ENCODE measurements at regions of chr1 and their contacts with region 1.

Region 1: DNA sequence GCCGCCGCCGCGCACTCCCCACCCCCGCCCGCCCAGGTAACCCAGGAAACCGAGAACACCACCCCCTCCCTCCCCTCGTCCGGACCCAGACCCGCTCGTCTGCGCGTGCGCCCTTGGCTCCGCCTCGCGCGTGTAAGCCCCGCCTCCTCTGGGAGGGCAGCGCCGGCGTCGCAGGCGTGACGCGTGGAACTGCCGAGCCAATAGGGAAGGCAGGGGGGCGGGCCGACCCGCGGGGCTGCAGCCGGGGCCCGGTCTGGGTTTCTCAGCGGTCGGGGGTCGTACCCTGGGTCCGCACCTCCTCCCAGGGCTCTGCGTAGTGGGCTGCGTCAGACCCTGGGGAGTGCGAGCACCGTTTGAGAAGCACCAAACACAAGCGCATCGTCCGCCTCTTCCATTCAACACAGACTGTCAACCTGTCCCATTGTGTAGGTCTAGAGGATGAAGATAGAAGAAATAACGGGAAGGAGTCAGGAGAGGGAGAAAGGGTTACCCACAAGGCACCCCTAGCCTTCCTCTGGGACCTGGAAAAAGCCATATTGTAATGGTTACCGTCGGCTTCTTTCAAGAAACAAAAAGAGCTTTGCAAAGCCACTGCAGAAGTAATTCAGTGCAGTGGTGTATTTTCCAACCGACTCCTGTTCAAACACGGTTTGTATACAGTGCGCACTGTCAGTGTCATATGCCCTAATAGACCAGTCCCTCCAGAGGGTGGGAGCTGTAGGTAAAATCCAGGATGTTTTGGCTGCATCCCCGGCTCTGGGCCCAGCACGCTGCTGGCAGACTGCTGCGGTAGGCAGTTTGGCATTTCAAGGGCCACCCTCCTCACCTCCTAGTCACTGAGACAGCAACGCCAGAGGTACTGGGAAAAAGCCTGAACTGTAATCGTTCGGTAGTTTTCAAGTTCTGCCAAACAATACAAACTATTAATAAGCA is 473 bp upstream of the LYST start:
- DNase-seq: peak; percentile 97 to 100 (median 99)
- ATAC-seq: peak; percentile 85
- H3K4me3 ChIP-seq: peak overlapping the region; percentile 89
- H3K4me3 Mint-ChIP-seq: peak overlapping the region; percentile 84 to 99 (median 96)
- H3K27ac ChIP-seq: peak overlapping the region; percentile 99
- H3K27ac Mint-ChIP-seq: peak overlapping the region; percentile 93 to 100 (median 98)
- H3K4me1 ChIP-seq: peaks cover 25 to 31% of the 10 kb centered on the region in 2 donors
- H3K4me1 Mint-ChIP-seq: peaks cover 32 to 55% (median 51%) of the 10 kb centered on the region in 7 donors
- H3K27me3 ChIP-seq: no peaks in the 10 kb centered on the region
- H3K27me3 Mint-ChIP-seq: no peaks in the 10 kb centered on the region

Region 2: DNA sequence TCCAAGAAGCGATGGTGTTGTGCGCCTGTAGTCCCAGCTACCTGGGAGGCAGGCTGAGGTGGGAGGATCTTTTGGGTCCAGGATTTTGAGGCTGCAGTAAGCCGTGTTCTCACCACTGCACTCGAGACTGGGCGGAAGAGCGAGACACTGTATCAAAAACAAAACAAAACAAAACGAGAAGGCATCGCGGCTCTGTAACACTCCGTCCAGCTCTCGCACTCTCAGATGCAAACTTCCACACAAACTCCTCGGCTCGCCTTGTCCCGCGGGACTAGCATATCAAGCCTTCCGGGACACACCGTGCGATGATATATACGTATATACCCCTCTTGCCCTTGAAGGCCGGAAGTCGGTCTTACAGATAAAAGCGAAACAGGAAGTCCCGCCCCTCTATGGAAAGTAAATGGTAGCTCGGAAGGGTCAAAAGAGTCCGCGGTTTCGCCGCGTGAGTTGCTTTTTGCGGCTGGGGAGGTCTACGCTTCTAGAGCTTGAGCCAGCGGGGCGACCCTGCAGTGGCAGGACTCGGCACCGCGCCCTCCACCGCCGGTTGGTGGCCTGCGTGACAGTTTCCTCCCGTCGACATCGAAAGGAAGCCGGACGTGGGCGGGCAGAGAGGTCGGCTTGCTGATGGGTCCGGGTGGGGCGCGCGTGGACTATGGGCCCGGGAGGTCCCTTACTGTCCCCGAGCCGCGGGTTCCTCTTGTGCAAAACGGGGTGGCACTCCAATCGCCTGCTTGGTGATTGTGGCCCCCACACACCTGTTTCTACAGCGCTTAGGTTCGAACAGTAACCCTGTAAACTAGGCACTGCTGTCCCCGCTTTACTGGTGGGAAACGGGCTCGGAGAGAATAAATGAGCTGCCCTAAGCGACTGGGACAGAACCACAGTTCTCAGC is 1493.9 kb before region 1 on chr1 and contains the start of gene COA6:
- CTCF ChIA-PET with region 1: no interaction called
- POLR2A ChIA-PET with region 1: no interaction called
- intact Hi-C with region 1: loop called in 1 of 2 experiments (anchors 5 kb)
- DNase-seq: peak; percentile 76 to 92 (median 90)
- ATAC-seq: peak; percentile 91
- H3K4me3 ChIP-seq: peak within 1 kb of the TSS; percentile 73
- H3K4me3 Mint-ChIP-seq: peak within 1 kb of the TSS; percentile 93 to 100 (median 97)
- H3K27ac ChIP-seq: peak within 1 kb of the TSS; percentile 95
- H3K27ac Mint-ChIP-seq: peak within 1 kb of the TSS; percentile 97 to 100 (median 99)
- H3K4me1 ChIP-seq: peaks cover 12 to 16% of the 10 kb centered on the region in 2 donors
- H3K4me1 Mint-ChIP-seq: peaks cover 30 to 66% (median 63%) of the 10 kb centered on the region in 7 donors
- H3K27me3 ChIP-seq: no peaks in the 10 kb centered on the region
- H3K27me3 Mint-ChIP-seq: no peaks in the 10 kb centered on the region
- total RNA-seq, gene COA6: 9.5 to 47.3 (median 18.5) TPM

Region 3: DNA sequence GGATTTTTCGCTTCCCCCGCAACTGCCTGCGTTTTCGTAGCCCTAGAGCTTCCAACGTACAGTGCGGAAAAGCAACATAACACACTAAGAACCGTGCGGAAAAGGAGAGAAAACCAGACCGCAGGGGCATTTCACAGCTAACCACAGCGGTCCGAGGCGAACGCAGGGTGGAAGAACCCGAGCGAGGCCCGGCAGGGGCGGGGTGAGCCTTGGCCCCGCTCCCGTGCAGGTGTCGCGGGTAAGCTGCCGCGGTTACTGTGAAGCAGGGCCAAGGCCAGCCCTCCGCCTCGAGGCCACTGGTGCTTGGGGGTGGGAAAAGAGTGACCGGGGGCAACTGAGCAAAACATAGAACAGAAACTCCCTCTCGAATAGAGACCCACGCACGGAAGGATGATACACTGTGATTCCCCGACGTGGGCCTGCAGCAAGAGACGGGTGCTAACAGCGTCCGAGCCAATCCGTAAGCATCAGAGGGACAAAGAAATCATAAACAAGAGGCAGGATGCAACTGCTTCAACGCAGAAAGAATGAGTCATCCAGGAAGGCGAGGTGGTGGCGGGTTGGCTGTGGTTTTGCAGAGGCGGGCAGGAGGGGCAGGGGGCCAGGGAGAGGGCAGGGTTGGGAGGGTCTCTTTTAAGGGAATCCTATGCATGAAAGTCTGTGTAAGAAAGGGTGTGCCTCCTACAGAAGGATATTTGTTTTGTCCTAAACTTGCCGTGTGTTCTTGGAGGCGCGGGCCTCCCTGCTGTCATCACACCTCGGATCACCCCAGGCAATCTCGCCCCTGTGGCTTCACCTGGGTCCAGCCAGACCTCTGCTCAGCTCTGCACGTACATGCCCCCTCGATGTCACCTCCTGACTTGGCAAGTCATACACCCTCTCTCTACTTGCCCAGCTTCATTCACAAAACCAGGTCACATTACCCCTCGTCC is 224.9 kb before region 1 on chr1:
- CTCF ChIA-PET with region 1: no interaction called
- POLR2A ChIA-PET with region 1: no interaction called
- intact Hi-C with region 1: loop called in 1 of 2 experiments (anchors 2 kb)
- DNase-seq: peak; percentile 20 to 88 (median 40)
- ATAC-seq: peak; percentile 86
- H3K4me3 ChIP-seq: peak overlapping the region; percentile 42
- H3K4me3 Mint-ChIP-seq: peak overlapping the region; percentile 57 to 90 (median 82)
- H3K27ac ChIP-seq: no peak overlapping the region
- H3K27ac Mint-ChIP-seq: peak overlapping the region; percentile 8 to 95 (median 79)
- H3K4me1 ChIP-seq: peaks cover 4 to 26% of the 10 kb centered on the region in 2 donors
- H3K4me1 Mint-ChIP-seq: peaks cover 15 to 57% (median 19%) of the 10 kb centered on the region in 7 donors
- H3K27me3 ChIP-seq: no peaks in the 10 kb centered on the region
- H3K27me3 Mint-ChIP-seq: peaks cover 19 to 33% (median 29%) of the 10 kb centered on the region in 5 donors

Region 4: GRCh38 chr1:235917267-235917811 is 50.2 kb after region 1 on chr1:
- CTCF ChIA-PET with region 1: interaction called, 3 read pairs
- POLR2A ChIA-PET with region 1: interaction called, 3 read pairs
- intact Hi-C with region 1: loop called (anchors 1 to 5 kb)
- DNase-seq: peak in 8 of 9 donors; percentile 23 to 67 (median 42)
- ATAC-seq: peak; percentile 89
- H3K4me3 ChIP-seq: no peak overlapping the region
- H3K4me3 Mint-ChIP-seq: peak overlapping the region in 6 of 10 donors; percentile 28 to 54 (median 45)
- H3K27ac ChIP-seq: no peak overlapping the region
- H3K27ac Mint-ChIP-seq: peak overlapping the region in 7 of 9 donors; percentile 33 to 79 (median 64)
- H3K4me1 ChIP-seq: peaks cover 3 to 7% of the 10 kb centered on the region in 2 donors
- H3K4me1 Mint-ChIP-seq: peaks cover 9 to 28% (median 13%) of the 10 kb centered on the region in 7 donors
- H3K27me3 ChIP-seq: no peaks in the 10 kb centered on the region
- H3K27me3 Mint-ChIP-seq: peaks cover 0 to 2% (median 0%) of the 10 kb centered on the region in 5 donors

Region 5: GRCh38 chr1:235999259-235999925 is 132.2 kb after region 1 on chr1:
- CTCF ChIA-PET with region 1: no interaction called
- POLR2A ChIA-PET with region 1: interaction called, 3 read pairs
- intact Hi-C with region 1: loop called (anchors 1 kb)
- DNase-seq: peak in 8 of 9 donors; percentile 7 to 75 (median 37)
- ATAC-seq: peak; percentile 90
- H3K4me3 ChIP-seq: no peak overlapping the region
- H3K4me3 Mint-ChIP-seq: peak overlapping the region in 9 of 10 donors; percentile 0 to 71 (median 55)
- H3K27ac ChIP-seq: peak overlapping the region; percentile 22
- H3K27ac Mint-ChIP-seq: peak overlapping the region; percentile 19 to 97 (median 80)
- H3K4me1 ChIP-seq: peaks cover 10 to 31% of the 10 kb centered on the region in 2 donors
- H3K4me1 Mint-ChIP-seq: peaks cover 10 to 71% (median 20%) of the 10 kb centered on the region in 7 donors
- H3K27me3 ChIP-seq: no peaks in the 10 kb centered on the region
- H3K27me3 Mint-ChIP-seq: no peaks in the 10 kb centered on the region

Region 6: DNA sequence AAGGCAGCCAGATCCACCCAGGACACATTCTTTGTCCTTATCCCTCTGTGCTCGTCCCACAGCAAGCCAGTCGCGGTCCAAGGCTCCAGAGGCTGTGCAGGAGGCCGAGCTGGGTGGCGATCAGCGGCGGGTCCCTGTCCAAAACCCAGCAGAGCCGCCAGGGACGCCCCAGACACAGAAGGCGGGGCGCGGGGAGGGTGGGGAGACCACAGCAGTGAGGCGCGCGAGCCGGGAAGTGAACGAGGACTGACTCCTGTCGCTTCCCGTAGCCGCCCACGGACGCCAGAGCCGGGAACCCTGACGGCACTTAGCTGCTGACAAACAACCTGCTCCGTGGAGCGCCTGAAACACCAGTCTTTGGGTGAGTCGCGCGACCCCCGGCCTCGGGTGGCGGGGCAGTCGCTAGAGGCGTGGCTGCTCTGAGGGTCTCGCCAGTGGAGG is 656.5 kb after region 1 on chr1 and contains the start of gene LGALS8:
- CTCF ChIA-PET with region 1: no interaction called
- POLR2A ChIA-PET with region 1: no interaction called
- intact Hi-C with region 1: loop called (anchors 5 kb)
- DNase-seq: peak; percentile 68 to 87 (median 83)
- ATAC-seq: peak; percentile 90
- H3K4me3 ChIP-seq: peak within 1 kb of the TSS; percentile 70
- H3K4me3 Mint-ChIP-seq: peak within 1 kb of the TSS; percentile 93 to 100 (median 99)
- H3K27ac ChIP-seq: peak within 1 kb of the TSS; percentile 87
- H3K27ac Mint-ChIP-seq: peak within 1 kb of the TSS; percentile 97 to 99 (median 98)
- H3K4me1 ChIP-seq: peaks cover 4 to 5% of the 10 kb centered on the region in 2 donors
- H3K4me1 Mint-ChIP-seq: peaks cover 8 to 38% (median 35%) of the 10 kb centered on the region in 7 donors
- H3K27me3 ChIP-seq: no peaks in the 10 kb centered on the region
- H3K27me3 Mint-ChIP-seq: peaks cover 0 to 3% (median 0%) of the 10 kb centered on the region in 5 donors
- total RNA-seq, gene LGALS8: 114 to 143 (median 134) TPM